ENCODE measurements at regions of chr12 and their contacts with region 1.

Region 1: GRCh38 chr12:111715279-111715678 is 29.4 kb downstream of the ACAD10 start:
- DNase-seq: no peak
- H3K4me3 ChIP-seq: no peak overlapping the region
- H3K27me3 ChIP-seq: no peaks in the 10 kb centered on the region
- CTCF ChIP-seq: no peak

Region 2: GRCh38 chr12:111769288-111769998 is 54.2 kb after region 1 on chr12:
- CTCF ChIA-PET with region 1: no interaction called
- POLR2A ChIA-PET with region 1: interaction called, 10 read pairs
- DNase-seq: no peak
- H3K4me3 ChIP-seq: no peak overlapping the region
- H3K27me3 ChIP-seq: no peaks in the 10 kb centered on the region
- CTCF ChIP-seq: no peak

Measured in BJ (cell line).